BJ (cell line): ENCODE measurements at regions of chr12 and their contacts with region 1.

Region 1: DNA sequence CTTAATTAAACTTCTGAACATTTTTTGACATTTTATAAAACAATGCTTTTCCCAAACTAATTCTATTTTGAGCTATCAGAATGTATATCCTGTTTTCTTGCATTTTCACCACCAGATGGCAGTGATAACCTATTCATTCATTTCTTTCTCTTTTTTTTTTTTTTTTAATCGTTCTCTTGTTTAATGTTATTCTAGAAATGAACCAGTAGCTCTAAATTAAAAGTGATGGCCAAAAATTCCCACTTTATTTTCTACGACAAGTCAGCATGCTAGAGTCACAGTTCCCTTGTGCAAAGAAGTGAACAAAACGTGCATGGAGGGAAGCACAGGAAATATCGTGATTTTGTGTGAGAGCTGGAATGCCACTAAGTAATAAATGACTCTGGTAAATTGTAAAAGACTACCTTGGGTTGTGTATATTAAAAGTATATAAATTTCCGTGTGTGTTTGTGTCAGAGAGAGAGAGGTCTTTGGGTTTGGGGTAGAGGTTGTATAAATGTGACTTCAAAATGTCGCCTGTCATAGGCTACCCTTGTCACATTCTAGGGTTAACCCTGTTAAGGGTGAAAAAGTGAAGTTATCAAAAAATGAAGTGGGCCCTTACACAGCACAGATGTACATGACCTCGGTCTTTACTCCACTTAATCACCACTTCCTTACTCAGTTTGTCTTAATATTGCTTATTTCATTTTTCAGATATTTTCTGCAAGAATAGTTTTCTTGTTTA is 40.4 kb upstream of the LDHB start:
- DNase-seq: no peak
- H3K4me3 ChIP-seq: no peak overlapping the region
- H3K27me3 ChIP-seq: no peaks in the 10 kb centered on the region
- CTCF ChIP-seq: peak; percentile 46

Region 2: GRCh38 chr12:21627924-21628323 is 70.1 kb before region 1 on chr12:
- CTCF ChIA-PET with region 1: no interaction called
- POLR2A ChIA-PET with region 1: no interaction called
- DNase-seq: no peak
- H3K4me3 ChIP-seq: no peak overlapping the region
- H3K27me3 ChIP-seq: no peaks in the 10 kb centered on the region
- CTCF ChIP-seq: no peak

Region 3: DNA sequence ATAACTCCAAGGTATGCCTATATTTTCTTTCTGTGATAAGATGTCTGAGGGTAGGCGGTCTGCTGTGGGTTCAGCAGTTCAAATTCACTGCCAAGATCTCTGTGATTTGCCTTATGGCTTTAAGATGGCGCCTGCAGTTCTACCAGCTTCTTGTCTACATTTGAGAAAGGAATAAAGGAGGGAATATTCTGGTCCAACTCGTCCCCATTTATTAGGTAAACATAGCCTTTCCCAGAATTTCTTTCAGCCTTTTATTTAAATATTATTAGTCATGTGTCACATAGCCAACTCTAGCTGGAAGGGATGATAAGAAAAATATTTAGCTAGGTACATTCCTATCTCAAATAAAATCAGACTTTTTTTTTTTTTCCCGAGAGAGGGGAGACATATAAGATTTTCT is 27.7 kb after region 1 on chr12:
- CTCF ChIA-PET with region 1: no interaction called
- POLR2A ChIA-PET with region 1: no interaction called
- DNase-seq: no peak
- H3K4me3 ChIP-seq: no peak overlapping the region
- H3K27me3 ChIP-seq: 0 out of 2 replicates have a peak, but pooled peaks cover 1% of the 10 kb centered on the region
- CTCF ChIP-seq: no peak

Region 4: DNA sequence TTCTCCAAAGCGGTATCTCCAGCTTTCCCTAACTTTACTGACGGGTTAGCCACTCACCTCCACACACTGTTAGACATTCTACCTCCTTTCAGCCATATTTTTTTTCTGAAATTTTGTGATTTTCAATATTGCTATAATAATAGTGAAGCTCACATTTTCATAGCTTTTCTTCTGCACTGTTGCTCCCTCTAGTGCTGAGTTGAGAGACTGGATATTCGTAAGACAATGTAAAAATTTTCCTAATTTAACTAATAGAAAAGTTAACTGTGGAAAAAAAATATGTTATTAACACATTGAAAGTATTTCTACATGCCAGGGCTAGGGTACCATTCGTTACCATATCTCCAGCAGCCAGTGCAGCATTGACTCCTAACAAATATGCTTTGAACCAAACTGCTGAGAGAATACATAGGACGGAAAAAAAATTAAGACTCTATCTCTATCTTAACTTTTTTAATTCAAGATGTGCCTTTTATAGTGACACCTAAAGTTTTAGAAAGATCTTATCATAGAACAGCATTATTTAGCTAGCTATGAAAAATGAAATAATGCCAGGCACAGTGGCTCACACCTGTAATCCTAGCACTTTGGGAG is 291.8 kb after region 1 on chr12:
- CTCF ChIA-PET with region 1: interaction called, 103 read pairs
- POLR2A ChIA-PET with region 1: interaction called, 3 read pairs
- DNase-seq: no peak
- H3K4me3 ChIP-seq: no peak overlapping the region
- H3K27me3 ChIP-seq: no peaks in the 10 kb centered on the region
- CTCF ChIP-seq: peak; percentile 59

Region 5: GRCh38 chr12:22018860-22019259 is 320.8 kb after region 1 on chr12:
- CTCF ChIA-PET with region 1: interaction called, 24 read pairs
- POLR2A ChIA-PET with region 1: no interaction called
- DNase-seq: no peak
- H3K4me3 ChIP-seq: no peak overlapping the region
- H3K27me3 ChIP-seq: no peaks in the 10 kb centered on the region
- CTCF ChIP-seq: peak; percentile 26; the same call in 1 of the 2 replicates

Region 6: DNA sequence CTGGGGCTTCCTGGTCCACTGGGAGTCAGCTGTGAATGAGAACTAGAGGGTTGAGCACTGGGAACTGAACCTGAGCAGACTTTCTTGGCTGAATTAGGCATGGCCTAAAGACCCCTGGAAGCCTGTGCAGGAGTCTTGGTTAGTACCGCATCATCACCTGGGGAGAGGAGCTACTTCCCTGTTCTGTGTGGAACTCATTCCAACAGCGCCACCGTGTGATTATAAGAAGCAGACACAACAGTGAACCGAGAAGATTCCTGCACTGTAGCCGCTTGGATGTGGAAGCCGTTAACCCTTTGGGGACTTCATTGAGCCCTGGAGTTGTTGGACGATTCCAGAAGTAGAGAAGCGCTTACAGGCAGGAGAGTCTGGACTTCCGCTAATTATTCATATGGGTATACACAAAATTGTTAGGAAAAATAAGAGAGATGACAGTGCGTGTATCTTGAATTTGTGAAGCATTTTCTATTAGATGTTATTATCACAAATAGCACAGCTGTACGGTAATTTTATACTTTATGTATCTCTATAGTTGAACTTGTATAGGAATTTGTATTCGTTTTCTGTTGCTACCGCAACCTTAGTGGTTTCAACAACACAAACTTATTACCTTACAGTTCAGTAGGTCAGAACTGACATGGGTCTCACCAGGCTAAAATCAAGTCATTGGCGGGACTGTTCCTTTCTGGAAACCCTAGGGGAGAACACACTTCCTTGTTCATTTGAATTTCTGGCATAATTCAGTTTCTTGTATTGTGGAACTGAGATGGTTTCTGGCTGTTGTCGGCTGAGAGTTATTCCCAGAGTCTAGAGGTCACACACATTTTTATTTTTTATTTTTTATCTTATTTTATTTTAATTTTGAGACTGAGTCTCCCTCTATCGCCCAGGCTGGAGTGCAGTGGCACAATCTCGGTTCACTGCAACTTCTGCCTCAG is 745.6 kb after region 1 on chr12:
- CTCF ChIA-PET with region 1: interaction called, 11 read pairs
- POLR2A ChIA-PET with region 1: no interaction called
- DNase-seq: no peak
- H3K4me3 ChIP-seq: no peak overlapping the region
- H3K27me3 ChIP-seq: no peaks in the 10 kb centered on the region
- CTCF ChIP-seq: peak; percentile 76

Region 7: DNA sequence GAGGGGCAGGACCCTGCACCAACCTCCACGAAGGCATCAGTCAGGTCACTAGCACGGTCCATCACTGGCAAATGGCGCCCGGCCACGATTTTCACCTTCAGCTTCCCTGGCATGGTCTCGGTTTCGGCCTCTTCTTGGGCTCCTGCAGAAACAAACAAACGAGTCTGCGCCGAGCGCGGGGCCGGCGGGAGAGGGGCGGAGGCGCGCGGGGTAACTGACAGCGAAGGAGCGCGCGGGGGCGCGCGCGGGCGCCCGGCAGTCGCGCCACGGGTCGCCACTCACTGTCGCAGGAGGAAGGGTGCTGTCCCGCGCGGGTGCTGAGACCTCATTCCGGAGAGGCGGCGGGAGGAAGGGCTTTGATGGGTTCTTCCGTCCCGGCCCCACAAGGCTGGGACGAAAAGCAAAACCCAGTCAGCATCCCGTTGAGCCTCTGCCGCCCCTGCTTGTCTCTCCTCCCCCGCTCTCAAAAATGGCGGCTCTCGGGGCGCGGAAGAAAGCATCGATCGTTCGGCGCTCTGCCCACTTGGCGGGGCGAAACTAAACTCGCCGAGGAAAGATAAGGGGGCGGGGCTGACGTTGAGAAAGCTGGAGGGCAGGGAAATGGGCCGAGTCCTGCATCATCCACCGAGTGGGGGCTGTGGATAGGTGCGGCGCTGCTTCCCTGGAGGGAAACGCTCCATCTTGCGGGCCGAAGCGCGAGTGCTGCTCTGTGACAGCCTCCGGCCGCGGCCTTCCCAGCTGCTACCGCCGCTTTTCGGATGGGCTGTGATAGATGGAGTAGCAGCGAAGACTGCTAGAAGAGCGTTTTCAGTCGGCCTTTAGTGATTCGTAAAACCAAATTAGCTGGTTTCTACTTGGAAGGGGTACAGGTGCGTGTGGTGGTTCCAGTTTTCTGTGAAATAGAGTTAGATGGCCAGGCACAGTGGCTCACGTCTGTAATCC is 846.2 kb after region 1 on chr12 and contains the start of gene C2CD5:
- CTCF ChIA-PET with region 1: no interaction called
- POLR2A ChIA-PET with region 1: interaction called, 11 read pairs
- DNase-seq: peak; percentile 77
- H3K4me3 ChIP-seq: peak within 1 kb of the TSS; percentile 95
- H3K27me3 ChIP-seq: no peaks in the 10 kb centered on the region
- CTCF ChIP-seq: peak; percentile 53
- polyA plus RNA-seq, gene C2CD5: 11.0 and 21.8 TPM in 2 replicates